Psoas muscle (tissue), 8 donors: ENCODE measurements at regions of chr12 and their contacts with region 1.

Region 1: DNA sequence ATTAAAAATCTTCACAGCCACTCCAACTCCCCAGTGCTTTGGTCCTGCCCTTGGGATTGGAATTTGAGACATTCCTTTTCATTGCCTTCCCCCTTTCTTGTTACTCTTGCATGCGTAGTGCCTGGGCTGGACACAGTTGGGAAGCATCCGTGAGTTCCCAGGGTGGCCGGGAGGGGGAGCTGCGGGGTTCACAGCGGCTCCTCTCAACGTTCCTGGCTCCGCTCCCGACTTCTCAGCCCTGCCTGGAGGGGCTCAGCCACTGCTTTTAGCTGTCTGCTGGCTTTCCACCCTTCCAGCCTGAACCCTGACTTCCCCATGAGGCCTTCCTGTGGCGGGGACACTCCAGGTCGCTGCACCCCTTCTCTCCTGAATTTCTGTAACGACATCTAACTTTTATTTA is 3.2 kb downstream of the TEX52 start:
- DNase-seq: peak; percentile 84 to 91
- ATAC-seq: peak; percentile 83 to 92 (median 88)
- H3K4me3 ChIP-seq: no peak overlapping the region
- H3K27ac ChIP-seq: no peak overlapping the region
- H3K4me1 ChIP-seq: peaks cover 5% of the 10 kb centered on the region
- H3K27me3 ChIP-seq: no peaks in the 10 kb centered on the region
- CTCF ChIP-seq: peak; percentile 83

Region 2: DNA sequence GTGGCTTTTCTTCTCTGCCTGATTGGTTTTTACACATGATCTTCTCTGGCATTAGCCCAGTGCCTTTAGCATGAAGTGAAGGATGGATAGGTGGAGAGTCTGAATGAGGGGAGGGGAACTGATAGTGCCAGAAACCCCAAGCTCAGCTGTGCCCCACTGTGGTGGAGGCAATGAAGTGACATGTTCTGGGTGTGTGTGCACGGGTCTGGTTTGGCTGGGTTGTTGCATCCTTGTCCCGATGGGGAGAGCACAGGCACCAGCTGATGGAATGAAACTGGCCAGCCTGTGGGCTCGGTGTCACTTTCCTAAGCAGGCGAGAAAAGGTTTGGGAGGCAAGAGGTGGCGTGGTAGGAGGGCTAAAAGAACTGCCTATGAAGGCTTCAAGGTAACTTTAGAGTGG is 735.6 kb before region 1 on chr12:
- intact Hi-C with region 1: no loop called
- DNase-seq: no peak
- ATAC-seq: no peak
- H3K4me3 ChIP-seq: no peak overlapping the region
- H3K27ac ChIP-seq: no peak overlapping the region
- H3K4me1 ChIP-seq: no peaks in the 10 kb centered on the region
- H3K27me3 ChIP-seq: no peaks in the 10 kb centered on the region
- CTCF ChIP-seq: no peak

Region 3: GRCh38 chr12:2890388-2891239 is 37.0 kb after region 1 on chr12 and contains the start of gene TULP3:
- intact Hi-C with region 1: no loop called
- DNase-seq: peak; percentile 99 to 100
- ATAC-seq: peak; percentile 98 to 99 (median 99)
- H3K4me3 ChIP-seq: peak within 1 kb of the TSS; percentile 90
- H3K27ac ChIP-seq: peak within 1 kb of the TSS; percentile 93
- H3K4me1 ChIP-seq: peaks cover 27% of the 10 kb centered on the region
- H3K27me3 ChIP-seq: no peaks in the 10 kb centered on the region
- CTCF ChIP-seq: no peak
- total RNA-seq, gene TULP3: 4.9 to 9.1 (median 8.0) TPM

Region 4: GRCh38 chr12:2944401-2945047 is 90.9 kb after region 1 on chr12:
- intact Hi-C with region 1: loop called in 1 of 2 experiments (anchors 2 kb)
- DNase-seq: peak; percentile 45 to 65
- ATAC-seq: peak; percentile 86 to 93 (median 90)
- H3K4me3 ChIP-seq: peak overlapping the region; percentile 18
- H3K27ac ChIP-seq: peak overlapping the region; percentile 54
- H3K4me1 ChIP-seq: peaks cover 5% of the 10 kb centered on the region
- H3K27me3 ChIP-seq: no peaks in the 10 kb centered on the region
- CTCF ChIP-seq: peak; percentile 77

Region 5: DNA sequence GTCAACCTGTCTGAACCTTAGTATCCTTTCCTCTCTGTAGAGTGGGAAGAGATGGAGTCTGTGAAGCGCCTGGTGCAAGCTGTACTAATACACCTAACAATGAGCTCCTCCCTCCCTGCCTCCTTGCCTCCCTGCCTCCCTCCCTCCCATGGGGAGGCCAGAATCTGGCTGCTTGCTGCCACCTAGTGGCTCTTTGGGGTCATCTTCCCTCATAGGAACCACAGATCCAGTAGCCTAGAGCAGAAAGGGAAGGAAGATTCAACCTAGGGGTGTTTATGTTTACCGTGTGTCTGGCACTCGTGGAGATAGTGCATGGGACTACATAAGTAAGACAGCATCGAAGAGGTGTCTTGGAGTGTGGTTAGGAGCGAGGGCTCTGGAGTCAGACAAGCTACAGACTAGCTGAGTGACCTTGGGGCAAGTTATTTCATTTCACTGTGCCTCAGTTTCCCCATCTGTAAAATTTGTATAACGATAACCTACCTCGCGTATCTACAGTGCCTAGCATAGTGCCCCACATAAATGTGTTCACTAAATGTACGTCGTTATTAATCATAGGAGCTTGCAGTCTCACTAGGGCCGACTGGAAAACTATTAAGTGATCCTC is 188.0 kb after region 1 on chr12:
- intact Hi-C with region 1: loop called (anchors 5 to 10 kb)
- DNase-seq: peak; percentile 51 to 80
- ATAC-seq: peak; percentile 43 to 73 (median 60)
- H3K4me3 ChIP-seq: peak overlapping the region; percentile 39
- H3K27ac ChIP-seq: peak overlapping the region; percentile 71
- H3K4me1 ChIP-seq: peaks cover 38% of the 10 kb centered on the region
- H3K27me3 ChIP-seq: no peaks in the 10 kb centered on the region
- CTCF ChIP-seq: peak; percentile 58

Region 6: GRCh38 chr12:3275171-3276041 is 421.8 kb after region 1 on chr12:
- intact Hi-C with region 1: loop called in 1 of 2 experiments (anchors 10 kb)
- DNase-seq: peak; percentile 73 to 89
- ATAC-seq: peak; percentile 77 to 92 (median 84)
- H3K4me3 ChIP-seq: no peak overlapping the region
- H3K27ac ChIP-seq: no peak overlapping the region
- H3K4me1 ChIP-seq: peaks cover 4% of the 10 kb centered on the region
- H3K27me3 ChIP-seq: no peaks in the 10 kb centered on the region
- CTCF ChIP-seq: peak; percentile 99